ENCODE measurements at regions of chr9 and their contacts with region 1.

Region 1: DNA sequence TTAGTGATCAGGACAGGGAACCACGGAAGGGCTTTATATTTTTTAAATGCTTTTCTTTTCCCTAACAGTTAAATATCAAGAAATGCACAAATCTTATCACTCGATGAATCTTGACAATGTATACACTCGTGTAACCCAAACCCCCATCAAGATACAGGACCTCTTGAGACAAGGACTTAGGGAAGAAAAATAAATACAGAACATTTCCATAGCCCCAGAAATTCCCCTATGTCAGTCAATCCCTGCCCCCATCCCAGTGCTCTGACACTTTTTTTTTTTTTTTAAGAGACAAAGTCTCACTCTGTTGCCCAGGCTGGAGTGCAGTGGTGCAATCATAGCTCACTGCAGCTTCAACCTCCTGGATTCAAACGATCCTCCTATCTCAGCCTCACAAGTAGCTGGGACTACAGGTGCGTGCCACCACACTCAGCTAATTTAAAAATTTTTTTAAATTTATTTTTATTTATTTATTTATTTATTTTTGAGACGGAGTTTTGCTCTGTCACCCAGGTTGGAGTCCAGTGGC is 2.7 kb downstream of the SPINK4 start:
- DNase-seq: no peak
- H3K4me3 ChIP-seq: no peak overlapping the region
- H3K27ac ChIP-seq: no peak overlapping the region
- H3K4me1 ChIP-seq: no peaks in the 10 kb centered on the region
- H3K27me3 ChIP-seq: no peaks in the 10 kb centered on the region
- CTCF ChIP-seq: no peak

Region 2: GRCh38 chr9:33143241-33143661 is 99.4 kb before region 1 on chr9:
- CTCF ChIA-PET with region 1: interaction called, 10 read pairs
- POLR2A ChIA-PET with region 1: no interaction called
- intact Hi-C with region 1: no loop called
- DNase-seq: peak; percentile 31
- H3K4me3 ChIP-seq: no peak overlapping the region
- H3K27ac ChIP-seq: no peak overlapping the region
- H3K4me1 ChIP-seq: peaks cover 11% of the 10 kb centered on the region
- H3K27me3 ChIP-seq: no peaks in the 10 kb centered on the region
- CTCF ChIP-seq: no peak

Region 3: GRCh38 chr9:33153666-33154065 is 89.0 kb before region 1 on chr9:
- CTCF ChIA-PET with region 1: no interaction called
- POLR2A ChIA-PET with region 1: no interaction called
- intact Hi-C with region 1: no loop called
- DNase-seq: no peak
- H3K4me3 ChIP-seq: no peak overlapping the region
- H3K27ac ChIP-seq: no peak overlapping the region
- H3K4me1 ChIP-seq: peaks cover 42% of the 10 kb centered on the region
- H3K27me3 ChIP-seq: no peaks in the 10 kb centered on the region
- CTCF ChIP-seq: no peak

Region 4: GRCh38 chr9:33297432-33297831 is 54.8 kb after region 1 on chr9:
- CTCF ChIA-PET with region 1: no interaction called
- POLR2A ChIA-PET with region 1: no interaction called
- intact Hi-C with region 1: no loop called
- DNase-seq: no peak
- H3K4me3 ChIP-seq: no peak overlapping the region
- H3K27ac ChIP-seq: no peak overlapping the region
- H3K4me1 ChIP-seq: peaks cover 4% of the 10 kb centered on the region
- H3K27me3 ChIP-seq: no peaks in the 10 kb centered on the region
- CTCF ChIP-seq: no peak

Measured in A673 (cell line).